B cell (primary cell): ENCODE measurements at regions of chr11 and their contacts with region 1.

Region 1: DNA sequence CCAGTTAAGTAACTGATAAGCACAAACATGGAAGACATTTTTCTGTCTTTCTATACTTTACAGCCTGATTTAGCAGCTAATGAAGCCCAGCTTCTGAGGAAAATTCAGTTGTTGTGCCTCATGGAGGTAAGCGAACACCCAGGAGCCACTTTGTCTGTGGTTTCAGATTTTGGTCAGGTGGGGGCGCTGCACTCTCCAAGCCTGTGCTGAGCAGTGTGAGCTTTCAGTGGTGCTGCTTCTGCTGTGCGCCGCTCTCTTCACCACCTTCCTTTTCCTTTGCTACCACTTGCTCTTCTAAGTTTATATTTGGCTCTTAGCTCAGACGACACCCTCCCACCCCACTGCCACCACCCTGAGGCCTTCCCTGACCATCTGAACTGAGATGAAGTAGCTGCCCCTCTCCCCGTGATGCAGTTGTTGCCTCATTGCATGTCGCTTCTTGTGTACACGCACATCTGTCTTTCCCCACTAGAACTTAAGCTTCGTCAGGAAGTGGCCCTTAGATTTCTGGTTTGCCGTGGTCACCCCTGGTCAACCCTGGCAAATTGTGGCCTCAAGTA is 14.0 kb downstream of the PSMD13 start:
- DNase-seq: peak; percentile 84
- ATAC-seq: peak; percentile 89
- H3K4me3 ChIP-seq: no peak overlapping the region
- H3K4me3 Mint-ChIP-seq: no peak overlapping the region
- H3K27ac ChIP-seq: no peak overlapping the region
- H3K27ac Mint-ChIP-seq: no peak overlapping the region
- H3K4me1 ChIP-seq: peaks cover 0 to 5% of the 10 kb centered on the region in 2 donors
- H3K4me1 Mint-ChIP-seq: peaks cover 7% of the 10 kb centered on the region
- H3K27me3 ChIP-seq: no peaks in the 10 kb centered on the region
- H3K27me3 Mint-ChIP-seq: no peaks in the 10 kb centered on the region
- CTCF ChIP-seq: peak; percentile 79

Region 2: GRCh38 chr11:279966-280582 is 29.3 kb after region 1 on chr11:
- CTCF ChIA-PET with region 1: interaction called, 34 read pairs
- POLR2A ChIA-PET with region 1: interaction called, 3 read pairs
- intact Hi-C with region 1: loop called (anchors 1 kb)
- DNase-seq: peak; percentile 81
- ATAC-seq: peak; percentile 69
- H3K4me3 ChIP-seq: peak overlapping the region in 4 of 5 experiments; percentile 29 to 57 (median 45)
- H3K4me3 Mint-ChIP-seq: peak overlapping the region; percentile 85
- H3K27ac ChIP-seq: no peak overlapping the region
- H3K27ac Mint-ChIP-seq: peak overlapping the region; percentile 81
- H3K4me1 ChIP-seq: peaks cover 36 to 39% of the 10 kb centered on the region in 2 donors
- H3K4me1 Mint-ChIP-seq: peaks cover 39% of the 10 kb centered on the region
- H3K27me3 ChIP-seq: peaks cover 0 to 45% (median 20%) of the 10 kb centered on the region in 4 experiments
- H3K27me3 Mint-ChIP-seq: peaks cover 28% of the 10 kb centered on the region
- CTCF ChIP-seq: no peak

Region 3: DNA sequence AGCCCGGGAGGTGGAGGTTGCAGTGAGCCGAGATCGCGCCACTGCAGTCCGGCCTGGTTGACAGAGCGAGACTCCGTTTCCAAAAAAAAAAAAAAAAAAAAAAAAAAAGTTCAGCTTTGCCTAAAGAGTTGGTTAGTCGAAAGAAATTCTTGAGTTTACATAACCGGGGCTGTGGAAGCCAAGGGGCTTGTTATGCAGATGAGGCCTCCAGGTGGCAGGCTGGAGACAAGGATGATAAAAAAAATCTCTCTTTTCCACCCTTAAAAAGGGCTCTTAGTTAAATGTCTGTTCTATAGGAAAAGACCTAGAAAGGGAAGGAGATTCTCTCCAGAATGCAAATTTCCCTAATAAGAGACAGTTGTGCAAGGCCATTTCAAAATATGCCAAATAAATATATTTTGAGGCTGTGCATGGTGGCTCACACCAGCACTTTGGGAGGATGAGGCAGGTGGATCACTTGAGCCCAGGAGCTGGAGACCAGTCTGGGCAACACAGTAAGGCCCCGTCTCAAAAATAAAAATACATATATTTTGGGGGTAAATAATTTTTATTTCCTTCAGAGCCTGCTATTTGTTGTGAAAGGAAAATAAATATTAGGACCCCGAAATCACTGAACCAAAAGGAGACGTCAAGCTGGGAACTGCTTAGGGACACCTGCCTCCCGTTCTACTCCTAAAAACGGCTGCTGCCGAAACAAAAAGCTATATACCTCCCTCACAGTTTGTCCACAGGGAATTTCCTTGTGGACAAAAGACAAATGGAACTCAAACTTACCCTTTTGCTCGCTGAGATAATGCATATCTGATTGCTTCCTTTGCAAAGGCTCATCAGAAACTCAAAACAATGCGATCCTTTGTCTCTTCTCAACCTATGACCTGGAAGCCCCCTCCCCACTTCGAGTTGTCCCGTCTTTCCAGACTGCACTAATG is 54.4 kb after region 1 on chr11:
- CTCF ChIA-PET with region 1: interaction called, 51 read pairs
- POLR2A ChIA-PET with region 1: interaction called, 3 read pairs
- intact Hi-C with region 1: no loop called
- DNase-seq: peak; percentile 71
- ATAC-seq: peak; percentile 37
- H3K4me3 ChIP-seq: no peak overlapping the region
- H3K4me3 Mint-ChIP-seq: no peak overlapping the region
- H3K27ac ChIP-seq: no peak overlapping the region
- H3K27ac Mint-ChIP-seq: peak overlapping the region; percentile 73
- H3K4me1 ChIP-seq: peaks cover 28 to 56% of the 10 kb centered on the region in 2 donors
- H3K4me1 Mint-ChIP-seq: peaks cover 52% of the 10 kb centered on the region
- H3K27me3 ChIP-seq: peaks cover 0 to 2% (median 0%) of the 10 kb centered on the region in 4 experiments
- H3K27me3 Mint-ChIP-seq: no peaks in the 10 kb centered on the region
- CTCF ChIP-seq: peak; percentile 67

Region 4: GRCh38 chr11:340539-341512 is 90.0 kb after region 1 on chr11:
- CTCF ChIA-PET with region 1: interaction called, 12 read pairs
- POLR2A ChIA-PET with region 1: no interaction called
- intact Hi-C with region 1: no loop called
- DNase-seq: no peak
- ATAC-seq: no peak
- H3K4me3 ChIP-seq: no peak overlapping the region
- H3K4me3 Mint-ChIP-seq: peak overlapping the region; percentile 44
- H3K27ac ChIP-seq: peak overlapping the region in 1 of 2 donors; percentile 11
- H3K27ac Mint-ChIP-seq: peak overlapping the region; percentile 64
- H3K4me1 ChIP-seq: peaks cover 19 to 24% of the 10 kb centered on the region in 2 donors
- H3K4me1 Mint-ChIP-seq: peaks cover 25% of the 10 kb centered on the region
- H3K27me3 ChIP-seq: no peaks in the 10 kb centered on the region
- H3K27me3 Mint-ChIP-seq: no peaks in the 10 kb centered on the region
- CTCF ChIP-seq: peak; percentile 6

Region 5: DNA sequence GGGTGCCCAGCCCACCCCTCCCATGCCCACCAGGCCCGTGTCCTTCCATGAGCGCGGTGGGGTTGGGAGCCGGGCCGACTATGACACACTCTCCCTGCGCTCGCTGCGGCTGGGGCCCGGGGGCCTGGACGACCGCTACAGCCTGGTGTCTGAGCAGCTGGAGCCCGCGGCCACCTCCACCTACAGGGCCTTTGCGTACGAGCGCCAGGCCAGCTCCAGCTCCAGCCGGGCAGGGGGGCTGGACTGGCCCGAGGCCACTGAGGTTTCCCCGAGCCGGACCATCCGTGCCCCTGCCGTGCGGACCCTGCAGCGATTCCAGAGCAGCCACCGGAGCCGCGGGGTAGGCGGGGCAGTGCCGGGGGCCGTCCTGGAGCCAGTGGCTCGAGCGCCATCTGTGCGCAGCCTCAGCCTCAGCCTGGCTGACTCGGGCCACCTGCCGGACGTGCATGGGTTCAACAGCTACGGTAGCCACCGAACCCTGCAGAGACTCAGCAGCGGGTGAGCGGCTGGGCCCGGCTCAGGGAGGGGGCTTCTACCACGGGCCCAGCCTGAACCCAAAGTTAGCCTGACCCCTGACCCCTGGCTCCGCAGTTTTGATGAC is 146.2 kb after region 1 on chr11:
- CTCF ChIA-PET with region 1: interaction called, 10 read pairs
- POLR2A ChIA-PET with region 1: no interaction called
- intact Hi-C with region 1: no loop called
- DNase-seq: peak; percentile 78
- ATAC-seq: peak; percentile 96
- H3K4me3 ChIP-seq: peak overlapping the region in 4 of 5 experiments; percentile 33 to 56 (median 53)
- H3K4me3 Mint-ChIP-seq: peak overlapping the region; percentile 57
- H3K27ac ChIP-seq: no peak overlapping the region
- H3K27ac Mint-ChIP-seq: no peak overlapping the region
- H3K4me1 ChIP-seq: peaks cover 12 to 15% of the 10 kb centered on the region in 2 donors
- H3K4me1 Mint-ChIP-seq: peaks cover 3% of the 10 kb centered on the region
- H3K27me3 ChIP-seq: peaks cover 0 to 9% (median 0%) of the 10 kb centered on the region in 4 experiments
- H3K27me3 Mint-ChIP-seq: no peaks in the 10 kb centered on the region
- CTCF ChIP-seq: peak; percentile 25